ENCODE measurements at regions of chr9 and their contacts with region 1.

Region 1: GRCh38 chr9:7799234-7799943 is at the start of gene DMAC1:
- DNase-seq: peak; percentile 82
- H3K4me3 Mint-ChIP-seq: peak within 1 kb of the TSS; percentile 91
- H3K27ac Mint-ChIP-seq: peak within 1 kb of the TSS; percentile 94
- H3K4me1 Mint-ChIP-seq: peaks cover 28% of the 10 kb centered on the region
- H3K27me3 Mint-ChIP-seq: no peaks in the 10 kb centered on the region
- total RNA-seq, gene DMAC1: 51.1 to 52.1 TPM

Region 2: DNA sequence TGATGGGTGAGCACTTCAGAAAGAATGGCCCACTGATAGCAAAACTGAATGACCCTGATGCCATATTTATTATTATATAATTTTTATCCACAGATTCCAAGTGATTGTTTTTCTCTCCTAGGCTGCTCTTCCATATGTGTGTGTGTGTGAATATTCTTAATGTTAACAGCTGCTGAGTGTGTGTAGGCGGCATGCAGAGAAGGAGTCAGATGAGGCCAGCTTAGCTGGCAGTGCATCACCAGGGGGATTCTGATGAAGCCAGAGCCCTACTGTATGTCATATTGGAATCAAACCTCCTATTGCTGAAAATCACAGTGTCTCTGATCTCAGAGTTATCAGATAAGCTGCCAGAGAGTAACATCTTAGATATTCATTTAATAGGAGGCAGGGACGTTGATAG is 176.9 kb before region 1 on chr9:
- CTCF ChIA-PET with region 1: no interaction called
- intact Hi-C with region 1: loop called (anchors 1 kb)
- DNase-seq: no peak
- H3K4me3 Mint-ChIP-seq: no peak overlapping the region
- H3K27ac Mint-ChIP-seq: no peak overlapping the region
- H3K4me1 Mint-ChIP-seq: peaks cover 19% of the 10 kb centered on the region
- H3K27me3 Mint-ChIP-seq: no peaks in the 10 kb centered on the region

Region 3: GRCh38 chr9:7756088-7756487 is 43.3 kb before region 1 on chr9:
- CTCF ChIA-PET with region 1: no interaction called
- intact Hi-C with region 1: loop called (anchors 1 kb)
- DNase-seq: peak; percentile 46
- H3K4me3 Mint-ChIP-seq: no peak overlapping the region
- H3K27ac Mint-ChIP-seq: peak overlapping the region; percentile 72
- H3K4me1 Mint-ChIP-seq: peaks cover 24% of the 10 kb centered on the region
- H3K27me3 Mint-ChIP-seq: no peaks in the 10 kb centered on the region

Region 4: DNA sequence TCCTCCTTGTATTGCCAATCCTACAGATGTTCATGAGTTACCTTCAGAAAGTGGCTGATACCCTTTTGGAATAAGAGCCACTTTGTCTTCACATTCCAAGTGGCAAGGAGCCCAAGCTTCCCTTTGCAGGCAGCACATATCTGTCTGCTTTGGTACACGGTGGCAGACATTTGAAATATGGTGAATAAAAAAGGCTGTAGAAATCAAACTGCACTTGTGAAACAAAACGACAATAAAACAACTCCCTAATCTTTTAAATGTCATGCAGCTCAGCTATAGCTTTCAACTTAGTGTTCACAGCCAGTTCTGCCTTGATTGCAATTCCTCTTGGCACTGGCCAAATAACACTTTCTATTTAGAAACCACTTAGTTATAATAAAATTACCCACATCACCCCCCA is 35.1 kb after region 1 on chr9:
- CTCF ChIA-PET with region 1: no interaction called
- intact Hi-C with region 1: no loop called
- DNase-seq: no peak
- H3K4me3 Mint-ChIP-seq: no peak overlapping the region
- H3K27ac Mint-ChIP-seq: no peak overlapping the region
- H3K4me1 Mint-ChIP-seq: no peaks in the 10 kb centered on the region
- H3K27me3 Mint-ChIP-seq: no peaks in the 10 kb centered on the region

Region 5: DNA sequence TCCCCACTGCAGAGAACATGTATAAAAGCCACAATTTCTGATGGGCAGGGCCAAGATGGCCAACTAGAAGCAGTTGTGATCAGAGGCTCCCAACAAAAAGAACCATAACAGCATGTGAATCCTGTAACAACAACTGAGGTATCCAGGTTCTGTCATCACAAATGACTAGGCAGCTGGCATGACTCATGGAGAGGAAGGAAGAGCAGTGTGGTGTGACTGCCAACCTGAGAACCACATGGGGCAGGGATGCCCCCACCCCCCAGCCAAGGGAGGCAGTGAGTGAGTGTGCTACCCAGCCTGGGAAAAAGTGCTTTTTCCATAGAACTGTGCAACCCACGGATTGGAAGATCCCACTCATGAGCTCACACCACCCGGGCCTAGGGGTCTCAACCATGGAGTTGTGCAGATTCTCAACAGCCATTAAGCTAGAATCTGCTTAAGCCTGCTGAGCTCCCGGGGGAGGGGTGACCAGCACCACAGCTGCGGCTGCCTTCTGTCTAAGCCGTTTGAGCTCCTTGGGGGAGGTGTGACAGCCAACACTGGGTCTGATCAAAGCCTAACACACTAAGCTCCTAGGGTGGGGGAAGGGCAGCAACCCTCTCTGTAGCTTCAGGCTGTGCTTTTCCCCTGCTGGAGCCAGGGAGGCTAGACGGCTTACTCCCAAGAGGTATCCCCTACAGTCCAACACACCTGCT is 80.3 kb after region 1 on chr9:
- CTCF ChIA-PET with region 1: no interaction called
- intact Hi-C with region 1: loop called (anchors 5 kb)
- DNase-seq: peak; percentile 68
- H3K4me3 Mint-ChIP-seq: no peak overlapping the region
- H3K27ac Mint-ChIP-seq: no peak overlapping the region
- H3K4me1 Mint-ChIP-seq: peaks cover 5% of the 10 kb centered on the region
- H3K27me3 Mint-ChIP-seq: no peaks in the 10 kb centered on the region

Region 6: GRCh38 chr9:7935681-7936080 is 136.3 kb after region 1 on chr9:
- CTCF ChIA-PET with region 1: no interaction called
- intact Hi-C with region 1: loop called (anchors 5 kb)
- DNase-seq: no peak
- H3K4me3 Mint-ChIP-seq: peak overlapping the region; percentile 31
- H3K27ac Mint-ChIP-seq: peak overlapping the region; percentile 68
- H3K4me1 Mint-ChIP-seq: peaks cover 24% of the 10 kb centered on the region
- H3K27me3 Mint-ChIP-seq: no peaks in the 10 kb centered on the region

Region 7: DNA sequence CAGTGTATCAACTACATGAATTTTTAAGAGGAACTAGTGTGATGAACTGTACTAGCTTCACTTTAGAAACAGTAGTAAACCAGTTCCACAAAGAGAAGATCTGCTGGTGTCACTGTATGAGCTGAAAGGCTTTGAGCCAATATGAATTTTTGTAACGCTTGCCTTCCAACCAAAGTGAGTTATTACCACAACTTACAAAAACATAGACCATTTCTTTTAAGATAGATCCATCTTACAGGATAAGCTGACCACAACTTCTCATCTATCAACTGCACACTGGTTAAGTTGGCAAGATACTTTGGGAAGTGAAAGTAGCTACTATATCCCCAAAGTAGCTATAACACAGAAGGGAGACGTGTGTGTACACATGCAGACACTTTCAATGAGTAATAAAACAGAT is 849.8 kb after region 1 on chr9:
- CTCF ChIA-PET with region 1: no interaction called
- intact Hi-C with region 1: no loop called
- DNase-seq: no peak
- H3K4me3 Mint-ChIP-seq: no peak overlapping the region
- H3K27ac Mint-ChIP-seq: no peak overlapping the region
- H3K4me1 Mint-ChIP-seq: no peaks in the 10 kb centered on the region
- H3K27me3 Mint-ChIP-seq: peaks cover 1% of the 10 kb centered on the region

Measured in activated naive CD4-positive, alpha-beta T cell treated with anti-CD3 and anti-CD28 coated beads for 36 hours (primary cell).